ENCODE measurements at regions of chr2 and their contacts with region 1.

Region 1: GRCh38 chr2:85288244-85288725 is 39.5 kb downstream of the TGOLN2 start:
- DNase-seq: no peak
- H3K4me3 ChIP-seq: no peak overlapping the region
- H3K27ac ChIP-seq: no peak overlapping the region
- H3K4me1 ChIP-seq: peaks cover 3 to 9% of the 10 kb centered on the region in 2 experiments; a peak in 2 of 4 replicates
- H3K27me3 ChIP-seq: no peaks in the 10 kb centered on the region
- CTCF ChIP-seq: no peak
- EP300 ChIP-seq: no peak
- RAD21 ChIP-seq: no peak

Region 2: GRCh38 chr2:85076618-85077274 is 211.5 kb before region 1 on chr2:
- CTCF ChIA-PET with region 1: interaction called, 13 read pairs
- POLR2A ChIA-PET with region 1: no interaction called
- DNase-seq: no peak
- H3K4me3 ChIP-seq: no peak overlapping the region
- H3K27ac ChIP-seq: no peak overlapping the region
- H3K4me1 ChIP-seq: no peaks in the 10 kb centered on the region; a peak in 1 of 4 replicates
- H3K27me3 ChIP-seq: no peaks in the 10 kb centered on the region
- CTCF ChIP-seq: no peak
- EP300 ChIP-seq: no peak
- RAD21 ChIP-seq: no peak

Region 3: DNA sequence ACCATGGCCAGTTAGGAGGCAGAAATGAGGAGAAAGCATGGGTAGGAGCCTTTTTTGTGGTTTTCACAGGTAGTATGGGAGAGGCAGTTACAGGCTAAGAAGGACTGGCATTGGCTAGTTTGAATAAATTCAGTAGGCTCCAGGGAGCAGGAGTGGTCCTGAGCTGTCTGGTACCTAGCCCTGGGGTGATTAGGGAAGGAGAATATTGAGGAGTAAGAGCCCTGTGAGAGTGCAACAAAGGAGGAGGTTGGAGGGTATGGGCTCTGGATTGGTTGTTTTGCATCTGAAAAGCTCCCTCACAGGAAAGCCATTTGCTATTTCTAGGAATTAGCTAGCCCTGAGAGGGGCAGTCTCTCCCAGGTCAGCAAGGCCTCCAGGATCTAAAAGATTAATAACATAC is 168.4 kb before region 1 on chr2:
- CTCF ChIA-PET with region 1: interaction called, 14 read pairs
- POLR2A ChIA-PET with region 1: no interaction called
- DNase-seq: no peak
- H3K4me3 ChIP-seq: no peak overlapping the region
- H3K27ac ChIP-seq: no peak overlapping the region
- H3K4me1 ChIP-seq: no peaks in the 10 kb centered on the region
- H3K27me3 ChIP-seq: no peaks in the 10 kb centered on the region
- CTCF ChIP-seq: no peak
- EP300 ChIP-seq: no peak
- RAD21 ChIP-seq: no peak

Region 4: DNA sequence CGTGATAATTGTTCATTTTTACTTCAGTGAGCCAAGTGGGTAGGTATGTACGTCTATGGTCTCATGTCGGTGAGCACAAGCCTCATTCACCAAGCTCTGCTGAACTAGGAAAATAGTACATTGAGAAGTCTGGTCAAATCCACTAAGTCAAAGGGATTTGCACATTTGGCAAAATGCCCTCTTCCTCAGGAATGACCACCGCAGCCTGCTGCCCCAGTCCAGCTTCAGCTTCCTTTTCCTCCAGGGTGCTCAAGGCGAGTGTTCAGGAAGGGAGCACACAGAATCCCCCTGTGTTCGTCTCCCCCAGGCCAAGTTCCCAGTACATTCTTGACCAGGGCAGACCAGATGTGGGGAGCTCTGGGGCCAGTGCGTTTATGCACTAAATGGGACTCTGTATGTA is 132.1 kb before region 1 on chr2:
- CTCF ChIA-PET with region 1: interaction called, 41 read pairs
- POLR2A ChIA-PET with region 1: no interaction called
- DNase-seq: no peak
- H3K4me3 ChIP-seq: no peak overlapping the region
- H3K27ac ChIP-seq: peak overlapping the region in 1 of 2 experiments; percentile 16; a peak in 1 of 4 replicates
- H3K4me1 ChIP-seq: peaks cover 9 to 41% of the 10 kb centered on the region in 2 experiments; a peak in 2 of 4 replicates
- H3K27me3 ChIP-seq: no peaks in the 10 kb centered on the region
- CTCF ChIP-seq: no peak
- EP300 ChIP-seq: no peak
- RAD21 ChIP-seq: no peak

Region 5: DNA sequence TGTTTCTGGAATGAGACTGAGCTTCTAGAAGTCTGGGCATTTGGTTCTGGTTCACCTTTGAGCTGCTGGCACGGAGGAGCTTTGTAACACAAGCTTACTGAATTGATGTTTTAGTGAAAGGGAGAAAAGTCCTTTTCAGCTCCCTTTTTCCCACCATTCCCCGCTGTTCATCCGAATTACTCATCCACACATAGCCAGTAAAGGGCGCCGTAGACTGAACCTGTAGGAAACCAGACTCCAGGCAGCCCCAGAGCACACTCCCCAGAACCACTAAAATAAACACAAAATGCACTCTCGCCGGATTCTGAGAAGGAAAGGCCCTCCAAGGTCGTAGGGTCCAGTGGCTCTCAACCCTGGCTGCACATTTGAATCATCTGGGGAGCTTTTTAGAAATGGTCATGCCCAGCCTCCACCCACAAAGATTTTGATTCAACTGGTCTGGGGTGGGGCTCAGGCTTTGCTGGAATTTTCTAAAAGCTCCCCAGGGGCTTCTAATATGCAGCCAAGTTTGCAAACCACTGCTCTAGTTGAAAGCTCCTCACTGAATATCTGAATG is 125.5 kb before region 1 on chr2:
- CTCF ChIA-PET with region 1: interaction called, 41 read pairs
- POLR2A ChIA-PET with region 1: no interaction called
- DNase-seq: no peak
- H3K4me3 ChIP-seq: no peak overlapping the region
- H3K27ac ChIP-seq: no peak overlapping the region
- H3K4me1 ChIP-seq: peaks cover 0 to 48% of the 10 kb centered on the region in 2 experiments; a peak in 3 of 4 replicates
- H3K27me3 ChIP-seq: no peaks in the 10 kb centered on the region
- CTCF ChIP-seq: no peak
- EP300 ChIP-seq: no peak
- RAD21 ChIP-seq: no peak

Region 6: DNA sequence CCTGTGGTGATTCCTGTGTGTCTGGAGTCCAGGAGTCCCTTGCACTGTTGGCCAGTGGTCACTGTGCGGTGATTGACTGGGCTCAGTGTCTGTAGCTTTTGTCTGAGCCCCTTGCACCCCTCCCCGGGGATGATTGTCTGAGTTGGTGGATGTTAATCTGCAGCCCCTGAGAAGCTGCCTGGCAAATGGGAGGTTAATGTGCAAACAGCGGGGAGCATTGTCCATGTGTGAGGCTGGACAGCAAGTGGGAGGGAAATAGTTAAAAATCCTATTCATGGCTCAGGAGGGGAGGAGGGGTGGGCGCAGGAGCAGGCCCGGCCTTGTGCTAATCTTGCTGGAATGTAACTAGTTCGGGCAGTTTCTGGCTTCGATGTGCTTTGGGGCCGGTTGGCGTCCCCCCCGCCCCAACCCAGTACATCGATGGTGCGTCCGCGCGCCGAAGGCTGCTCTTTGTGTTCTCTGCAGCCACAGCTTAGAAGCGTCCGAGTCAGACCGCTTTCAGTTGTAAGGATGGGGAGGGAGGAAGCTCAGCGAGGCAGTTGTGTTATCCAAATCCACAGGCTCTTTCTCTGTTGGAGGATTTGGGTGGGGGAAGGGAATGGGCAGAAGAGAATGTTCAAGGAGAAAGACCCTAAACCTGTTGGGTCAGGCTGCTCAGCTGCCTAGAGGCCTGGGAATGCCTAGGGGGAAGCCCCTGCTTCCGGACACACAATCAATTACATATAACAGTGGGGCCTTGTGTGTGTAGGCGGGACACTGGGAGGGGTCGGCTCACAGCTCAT is 32.3 kb before region 1 on chr2:
- CTCF ChIA-PET with region 1: interaction called, 17 read pairs
- POLR2A ChIA-PET with region 1: no interaction called
- DNase-seq: peak; percentile 50
- H3K4me3 ChIP-seq: no peak overlapping the region
- H3K27ac ChIP-seq: peak overlapping the region; percentile 29 to 95; a peak in 3 of 4 replicates
- H3K4me1 ChIP-seq: peaks cover 33 to 62% of the 10 kb centered on the region in 2 experiments
- H3K27me3 ChIP-seq: no peaks in the 10 kb centered on the region
- CTCF ChIP-seq: no peak
- EP300 ChIP-seq: no peak
- RAD21 ChIP-seq: no peak

Region 7: GRCh38 chr2:85266146-85267041 is 21.9 kb before region 1 on chr2:
- CTCF ChIA-PET with region 1: interaction called, 30 read pairs
- POLR2A ChIA-PET with region 1: no interaction called
- DNase-seq: peak; percentile 72
- H3K4me3 ChIP-seq: peak overlapping the region in 1 of 2 experiments; percentile 39; a peak in 1 of 4 replicates
- H3K27ac ChIP-seq: no peak overlapping the region
- H3K4me1 ChIP-seq: peaks cover 9 to 22% of the 10 kb centered on the region in 2 experiments; a peak in 2 of 4 replicates
- H3K27me3 ChIP-seq: no peaks in the 10 kb centered on the region
- CTCF ChIP-seq: peak; percentile 95
- EP300 ChIP-seq: no peak
- RAD21 ChIP-seq: peak; percentile 70

Region 8: DNA sequence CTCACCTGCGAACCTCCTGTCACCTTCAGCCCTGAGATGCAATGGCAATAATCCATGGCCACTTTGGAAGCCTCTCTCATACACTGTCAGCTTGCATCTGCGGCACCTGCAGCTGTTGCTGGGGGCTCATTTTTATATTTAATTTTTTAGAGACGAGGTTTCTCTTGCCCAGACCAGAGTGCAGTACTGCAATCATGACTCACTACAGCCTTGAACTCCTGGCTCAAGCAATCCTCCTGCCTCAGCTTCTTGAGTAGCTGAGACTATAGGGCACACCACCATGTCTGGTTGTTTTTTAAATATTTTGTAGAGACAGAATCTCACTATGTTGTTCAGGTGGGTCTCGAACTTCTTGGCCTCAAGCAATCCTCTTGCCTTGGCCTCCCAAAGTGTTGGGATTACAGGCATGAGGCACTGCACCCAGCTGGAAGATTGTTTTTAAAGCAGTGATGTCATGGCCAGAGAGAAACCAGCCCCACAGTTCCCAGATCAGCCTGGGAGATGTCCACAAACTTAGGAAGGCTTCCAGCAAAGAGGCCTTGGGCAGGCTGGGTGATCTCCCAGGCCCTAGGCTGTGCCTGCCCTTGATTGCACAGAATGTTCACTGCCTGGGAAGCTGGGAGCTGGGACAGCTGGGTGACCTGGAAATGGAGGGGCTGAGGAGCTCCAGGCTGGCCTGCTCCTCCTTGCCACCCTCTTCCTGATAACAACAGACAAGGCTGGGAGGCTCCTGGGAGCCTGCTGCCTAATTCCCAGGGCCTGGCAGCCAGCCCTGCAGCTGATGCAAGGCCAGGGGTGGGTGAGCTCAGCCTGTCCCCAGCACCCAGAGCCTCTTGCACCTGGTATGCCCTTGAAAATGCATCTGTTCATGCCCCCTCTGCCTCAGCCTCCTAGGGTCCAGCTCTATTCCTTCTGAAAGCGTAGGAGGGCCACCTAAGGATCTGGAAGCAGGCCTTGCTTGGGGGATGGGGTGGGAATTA is 157.3 kb after region 1 on chr2:
- CTCF ChIA-PET with region 1: no interaction called
- POLR2A ChIA-PET with region 1: no interaction called
- DNase-seq: peak; percentile 73
- H3K4me3 ChIP-seq: no peak overlapping the region
- H3K27ac ChIP-seq: peak overlapping the region; percentile 42 to 90; a peak in 3 of 4 replicates
- H3K4me1 ChIP-seq: peaks cover 18 to 33% of the 10 kb centered on the region in 2 experiments; a peak in 2 of 4 replicates
- H3K27me3 ChIP-seq: no peaks in the 10 kb centered on the region
- CTCF ChIP-seq: no peak
- EP300 ChIP-seq: peak in 1 of 2 experiments; percentile 43; a peak in 1 of 4 replicates
- RAD21 ChIP-seq: peak; percentile 23; the same call in 1 of the 2 replicates

Region 9: DNA sequence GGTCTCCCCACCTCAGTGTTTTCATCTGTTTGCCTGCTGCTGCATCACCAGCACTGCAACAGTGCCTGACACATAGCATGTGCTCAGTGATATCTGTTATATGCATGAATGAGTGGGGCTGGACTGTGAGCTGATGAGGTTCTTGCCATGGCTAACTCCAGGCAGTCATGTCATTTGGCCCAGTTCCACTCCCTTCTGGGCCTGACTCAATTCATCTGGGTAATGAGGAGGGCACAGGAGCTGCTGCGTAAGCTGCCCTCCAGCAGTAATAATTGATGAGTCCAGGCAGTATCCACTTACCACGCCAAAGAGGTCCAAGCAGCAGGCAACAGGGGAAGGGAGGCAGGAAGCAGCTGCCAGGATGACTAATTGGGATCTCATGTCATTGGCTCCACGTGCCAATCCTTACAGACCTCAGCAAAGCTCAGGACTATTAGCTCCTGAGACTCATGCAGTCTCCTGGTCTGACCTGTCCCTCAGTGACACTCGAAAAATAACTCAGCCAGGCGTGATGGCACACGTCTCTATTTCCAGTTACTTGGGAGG is 216.6 kb after region 1 on chr2:
- CTCF ChIA-PET with region 1: no interaction called
- POLR2A ChIA-PET with region 1: no interaction called
- DNase-seq: peak; percentile 71
- H3K4me3 ChIP-seq: no peak overlapping the region
- H3K27ac ChIP-seq: peak overlapping the region; percentile 60 to 68
- H3K4me1 ChIP-seq: peaks cover 19 to 25% of the 10 kb centered on the region in 2 experiments; a peak in 3 of 4 replicates
- H3K27me3 ChIP-seq: no peaks in the 10 kb centered on the region
- CTCF ChIP-seq: no peak
- EP300 ChIP-seq: peak; percentile 56 to 90; a peak in 3 of 4 replicates
- RAD21 ChIP-seq: peak; percentile 3; the same call in 1 of the 2 replicates

Measured in SK-N-SH (cell line).